ENCODE measurements at regions of chr3 and their contacts with region 1.

Region 1: DNA sequence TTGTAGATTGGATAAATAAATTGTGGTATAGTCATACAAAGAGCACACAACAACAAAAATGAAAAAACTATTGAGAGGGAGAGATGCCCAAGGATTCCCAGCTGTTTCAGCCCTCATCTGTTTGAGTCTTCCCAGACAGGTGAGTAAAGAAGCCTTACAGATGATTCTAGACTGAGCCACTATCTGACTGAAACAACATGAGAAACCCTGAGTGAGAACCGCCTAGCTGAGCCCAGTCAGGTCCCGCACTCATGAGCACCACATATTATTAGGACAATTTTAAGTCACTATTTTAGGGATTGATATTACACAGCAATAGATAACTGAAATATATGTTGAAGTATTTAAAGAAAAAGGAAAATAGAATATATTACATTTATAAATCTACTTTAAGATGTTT is 19.0 kb downstream of the POPDC2 start:
- DNase-seq: no peak
- ATAC-seq: no peak
- H3K4me3 ChIP-seq: no peak overlapping the region
- H3K4me3 Mint-ChIP-seq: no peak overlapping the region
- H3K27ac ChIP-seq: no peak overlapping the region
- H3K27ac Mint-ChIP-seq: no peak overlapping the region
- H3K4me1 ChIP-seq: peaks cover 0 to 4% of the 10 kb centered on the region in 2 experiments
- H3K4me1 Mint-ChIP-seq: peaks cover 0 to 18% (median 5%) of the 10 kb centered on the region in 3 donors
- H3K27me3 ChIP-seq: no peaks in the 10 kb centered on the region
- H3K27me3 Mint-ChIP-seq: no peaks in the 10 kb centered on the region

Region 2: DNA sequence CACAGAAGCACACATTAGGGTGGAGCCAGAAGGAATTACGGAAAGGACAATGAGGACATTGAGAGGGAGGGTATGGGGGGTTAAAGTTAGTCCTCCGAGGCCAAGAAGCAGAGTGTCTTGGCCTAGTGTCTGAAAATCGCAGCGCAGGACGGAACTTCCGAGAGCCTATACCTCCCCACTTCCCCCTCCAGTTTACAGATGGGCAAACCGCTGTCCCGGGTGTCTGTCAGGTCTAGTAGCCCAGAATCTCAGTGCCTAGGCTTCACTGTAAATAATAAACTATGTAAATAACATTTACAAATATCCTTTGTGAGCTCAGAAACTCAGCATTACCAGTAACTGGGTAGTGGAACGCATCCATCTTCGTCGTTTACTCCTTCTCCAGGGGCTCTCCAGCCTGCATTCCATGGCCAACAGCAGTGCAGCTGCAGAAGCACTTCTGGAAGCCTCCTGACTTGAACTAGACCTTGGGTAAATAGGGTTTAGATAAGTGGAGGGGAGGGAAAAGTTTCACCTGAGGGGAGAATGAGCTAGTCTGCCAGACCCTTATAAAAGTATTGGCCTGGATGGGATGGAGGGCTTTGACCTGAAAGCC is 61.2 kb before region 1 on chr3:
- CTCF ChIA-PET with region 1: no interaction called
- POLR2A ChIA-PET with region 1: no interaction called
- DNase-seq: peak in 10 of 35 experiments; percentile 6 to 35 (median 13)
- ATAC-seq: peak; percentile 14 to 63 (median 56)
- H3K4me3 ChIP-seq: peak overlapping the region; percentile 62 to 63
- H3K4me3 Mint-ChIP-seq: peak overlapping the region; percentile 83 to 96 (median 88)
- H3K27ac ChIP-seq: peak overlapping the region; percentile 70
- H3K27ac Mint-ChIP-seq: peak overlapping the region; percentile 44 to 90
- H3K4me1 ChIP-seq: peaks cover 2 to 14% of the 10 kb centered on the region in 2 experiments
- H3K4me1 Mint-ChIP-seq: peaks cover 8 to 13% (median 12%) of the 10 kb centered on the region in 3 donors
- H3K27me3 ChIP-seq: no peaks in the 10 kb centered on the region
- H3K27me3 Mint-ChIP-seq: peaks cover 0 to 8% of the 10 kb centered on the region in 2 donors

Region 3: GRCh38 chr3:119973289-119973688 is 331.9 kb after region 1 on chr3:
- CTCF ChIA-PET with region 1: no interaction called
- POLR2A ChIA-PET with region 1: interaction called in 1 of 2 experiments, 18 read pairs
- DNase-seq: no peak
- ATAC-seq: no peak
- H3K4me3 ChIP-seq: no peak overlapping the region
- H3K4me3 Mint-ChIP-seq: no peak overlapping the region
- H3K27ac ChIP-seq: no peak overlapping the region
- H3K27ac Mint-ChIP-seq: no peak overlapping the region
- H3K4me1 ChIP-seq: no peaks in the 10 kb centered on the region
- H3K4me1 Mint-ChIP-seq: peaks cover 45 to 58% (median 48%) of the 10 kb centered on the region in 3 donors
- H3K27me3 ChIP-seq: no peaks in the 10 kb centered on the region
- H3K27me3 Mint-ChIP-seq: no peaks in the 10 kb centered on the region

Region 4: DNA sequence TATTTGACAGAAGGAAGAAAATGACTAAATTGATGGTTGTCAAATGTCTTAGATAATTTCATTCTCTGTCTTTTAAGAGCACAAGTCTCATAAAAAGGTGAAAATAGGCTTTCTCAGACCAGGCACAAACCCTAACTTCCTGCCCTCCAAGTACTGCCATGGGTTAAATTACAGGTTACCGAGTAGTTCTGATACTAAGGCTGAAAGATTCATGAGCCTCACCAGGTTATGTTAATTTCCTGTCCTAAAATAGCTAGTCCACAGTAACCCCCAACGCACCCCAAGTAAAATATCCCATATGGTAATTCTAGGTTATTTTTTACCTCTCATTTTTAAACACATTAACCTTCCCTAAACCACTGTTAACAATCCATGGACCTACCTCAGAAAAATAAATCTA is 410.8 kb after region 1 on chr3:
- CTCF ChIA-PET with region 1: no interaction called
- POLR2A ChIA-PET with region 1: no interaction called
- DNase-seq: peak in 1 of 35 experiments; percentile 13
- ATAC-seq: peak; percentile 37 to 59 (median 55)
- H3K4me3 ChIP-seq: no peak overlapping the region
- H3K4me3 Mint-ChIP-seq: peak overlapping the region; percentile 3 to 59 (median 10)
- H3K27ac ChIP-seq: no peak overlapping the region
- H3K27ac Mint-ChIP-seq: peak overlapping the region; percentile 10 to 18
- H3K4me1 ChIP-seq: peaks cover 18 to 27% of the 10 kb centered on the region in 2 experiments
- H3K4me1 Mint-ChIP-seq: peaks cover 84 to 91% (median 88%) of the 10 kb centered on the region in 3 donors
- H3K27me3 ChIP-seq: no peaks in the 10 kb centered on the region
- H3K27me3 Mint-ChIP-seq: no peaks in the 10 kb centered on the region